AG04450 (cell line): ENCODE measurements at regions of chr2 and their contacts with region 1.

Region 1: GRCh38 chr2:72745679-72746368 is 80.0 kb downstream of the EXOC6B start:
- DNase-seq: peak; percentile 42
- H3K4me3 ChIP-seq: no peak overlapping the region
- H3K27ac ChIP-seq: no peak overlapping the region
- H3K27me3 ChIP-seq: no peaks in the 10 kb centered on the region
- CTCF ChIP-seq: peak; percentile 77

Region 2: DNA sequence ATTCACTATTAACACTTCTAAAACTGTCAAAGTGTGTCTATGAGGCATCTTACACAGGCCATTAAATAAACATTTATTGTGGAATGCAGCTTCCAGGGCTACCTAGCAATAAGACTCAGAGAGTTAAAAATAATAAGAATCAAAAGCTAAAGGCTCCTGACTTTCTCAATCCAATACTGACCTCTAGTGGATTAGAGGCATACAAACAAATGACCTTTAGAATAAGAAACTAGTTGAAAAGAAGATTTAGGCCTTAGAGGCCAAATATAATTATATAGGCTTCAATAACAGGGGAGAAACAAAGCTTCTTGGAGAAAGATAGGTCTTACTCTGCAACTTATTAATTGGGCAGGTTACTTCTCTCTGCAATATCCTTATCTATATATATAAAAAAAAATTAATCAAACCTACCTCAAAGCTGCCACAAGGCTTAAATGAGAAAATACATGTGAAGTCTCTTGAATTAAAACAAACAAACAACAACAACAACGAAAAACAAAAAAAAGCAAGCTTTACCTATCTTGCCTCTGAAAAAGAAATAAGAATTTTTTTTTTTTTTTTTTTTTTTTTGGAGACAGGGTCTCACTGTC is 166.1 kb before region 1 on chr2:
- CTCF ChIA-PET with region 1: interaction called, 44 read pairs
- POLR2A ChIA-PET with region 1: no interaction called
- DNase-seq: peak; percentile 11
- H3K4me3 ChIP-seq: no peak overlapping the region
- H3K27ac ChIP-seq: no peak overlapping the region
- H3K27me3 ChIP-seq: no peaks in the 10 kb centered on the region
- CTCF ChIP-seq: peak; percentile 71

Region 3: DNA sequence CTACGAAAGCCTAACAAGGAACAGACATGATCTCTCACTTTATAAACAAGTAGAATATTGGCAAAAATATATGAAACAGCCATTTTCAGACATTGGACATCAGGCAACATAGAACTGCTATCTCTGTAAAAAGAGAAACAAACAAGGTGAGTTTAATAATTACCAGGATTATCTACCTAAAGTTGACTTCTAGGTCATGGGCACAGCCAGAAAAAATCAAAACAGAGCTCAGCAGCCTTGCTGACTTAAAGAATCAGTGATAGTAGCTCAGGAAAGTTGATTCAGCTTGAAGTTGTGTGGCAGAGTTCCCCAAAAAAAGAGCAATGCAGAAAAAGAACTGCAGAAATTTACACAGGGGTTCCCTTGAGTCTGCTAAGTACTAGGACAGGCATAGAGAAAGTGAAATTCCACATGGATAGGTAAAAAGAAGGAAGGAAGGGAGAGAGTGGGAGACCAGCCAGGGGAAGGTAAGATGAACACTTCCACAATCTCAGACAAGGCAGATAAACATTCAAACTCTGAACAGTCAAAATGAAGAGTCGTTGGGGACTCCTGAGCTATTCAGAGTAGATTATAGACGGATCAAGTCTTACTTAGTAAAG is 22.0 kb before region 1 on chr2:
- CTCF ChIA-PET with region 1: interaction called, 14 read pairs
- POLR2A ChIA-PET with region 1: no interaction called
- DNase-seq: no peak
- H3K4me3 ChIP-seq: no peak overlapping the region
- H3K27ac ChIP-seq: no peak overlapping the region
- H3K27me3 ChIP-seq: no peaks in the 10 kb centered on the region
- CTCF ChIP-seq: no peak

Region 4: DNA sequence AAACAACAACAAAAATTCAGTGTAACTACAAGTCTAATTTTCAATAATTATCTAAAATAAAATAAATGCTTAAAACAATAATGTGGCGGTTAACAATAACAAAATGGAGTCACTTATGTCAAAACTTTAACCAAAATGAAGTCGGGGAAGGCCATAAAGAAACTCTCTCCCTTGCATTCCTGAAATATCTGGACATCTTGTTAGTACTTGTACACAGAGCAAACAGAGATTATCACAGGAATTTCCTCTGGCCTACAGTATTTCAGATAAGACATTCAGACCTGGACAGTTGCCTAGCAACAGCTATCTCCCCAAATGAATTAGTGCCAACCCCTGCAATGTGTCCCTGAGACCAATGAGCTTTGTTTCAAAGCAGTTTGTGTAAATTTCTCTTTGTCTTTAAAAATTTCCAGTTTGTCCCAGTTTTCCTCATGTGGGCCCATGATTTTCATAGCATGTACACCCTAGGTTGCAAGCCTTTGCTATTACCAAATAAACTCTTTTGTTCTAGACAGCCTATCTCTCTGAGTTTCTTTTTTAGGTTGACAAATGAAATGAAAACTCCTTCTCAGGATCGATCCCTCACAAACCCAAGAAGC is 11.5 kb after region 1 on chr2:
- CTCF ChIA-PET with region 1: interaction called, 18 read pairs
- POLR2A ChIA-PET with region 1: no interaction called
- DNase-seq: no peak
- H3K4me3 ChIP-seq: no peak overlapping the region
- H3K27ac ChIP-seq: no peak overlapping the region
- H3K27me3 ChIP-seq: no peaks in the 10 kb centered on the region
- CTCF ChIP-seq: no peak